GM12878 (cell line): ENCODE measurements at regions of chr9 and their contacts with region 1.

Region 1: GRCh38 chr9:116737152-116737546 is 50.0 kb downstream of the TRIM32 start:
- DNase-seq: peak; percentile 1
- ATAC-seq: peak; percentile 91
- H3K4me3 ChIP-seq: no peak overlapping the region
- H3K27ac ChIP-seq: no peak overlapping the region
- H3K4me1 ChIP-seq: peaks cover 10% of the 10 kb centered on the region
- H3K27me3 ChIP-seq: no peaks in the 10 kb centered on the region
- CTCF ChIP-seq: peak; percentile 94 to 98 (median 96)
- EP300 ChIP-seq: no peak
- POLR2A ChIP-seq: no peak
- RAD21 ChIP-seq: peak; percentile 98

Region 2: DNA sequence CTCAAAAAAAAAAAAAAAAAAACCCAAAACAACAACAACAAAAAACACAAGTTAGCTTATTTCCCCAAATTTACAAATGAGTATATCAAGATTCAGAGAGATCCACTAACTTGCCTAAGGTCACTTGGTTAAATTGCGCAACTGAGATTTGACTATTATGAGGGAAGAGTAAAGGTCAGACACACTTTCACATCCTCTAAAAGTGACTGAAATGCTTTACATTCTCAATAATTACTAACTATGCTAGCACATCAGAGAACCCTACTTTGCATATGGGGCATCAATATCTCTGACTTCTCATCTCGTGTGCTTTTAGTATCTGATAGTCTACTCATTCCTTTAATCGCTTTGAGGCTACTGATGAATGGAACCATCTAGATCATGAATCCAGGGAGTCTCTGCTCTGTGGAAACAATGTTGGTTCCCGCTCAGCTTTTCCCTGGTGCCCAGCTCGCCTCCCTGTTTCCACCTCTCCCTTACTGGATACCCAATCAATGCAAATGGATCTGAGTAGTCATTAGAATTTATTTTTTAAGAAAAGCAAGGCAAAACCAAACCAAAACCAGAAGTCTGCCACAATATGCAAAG is 232.2 kb before region 1 on chr9:
- CTCF ChIA-PET with region 1: no interaction called
- POLR2A ChIA-PET with region 1: no interaction called
- RAD21 ChIA-PET with region 1: no interaction called
- SMC1A ChIA-PET with region 1: no interaction called
- in situ Hi-C with region 1: no loop called
- intact Hi-C with region 1: no loop called
- DNase-seq: peak; percentile 27
- ATAC-seq: peak; percentile 96
- H3K4me3 ChIP-seq: no peak overlapping the region
- H3K27ac ChIP-seq: no peak overlapping the region
- H3K4me1 ChIP-seq: peaks cover 4% of the 10 kb centered on the region
- H3K27me3 ChIP-seq: no peaks in the 10 kb centered on the region
- CTCF ChIP-seq: no peak
- EP300 ChIP-seq: peak in 1 of 2 experiments; percentile 44; a peak in 1 of 4 replicates
- POLR2A ChIP-seq: no peak
- RAD21 ChIP-seq: no peak

Region 3: DNA sequence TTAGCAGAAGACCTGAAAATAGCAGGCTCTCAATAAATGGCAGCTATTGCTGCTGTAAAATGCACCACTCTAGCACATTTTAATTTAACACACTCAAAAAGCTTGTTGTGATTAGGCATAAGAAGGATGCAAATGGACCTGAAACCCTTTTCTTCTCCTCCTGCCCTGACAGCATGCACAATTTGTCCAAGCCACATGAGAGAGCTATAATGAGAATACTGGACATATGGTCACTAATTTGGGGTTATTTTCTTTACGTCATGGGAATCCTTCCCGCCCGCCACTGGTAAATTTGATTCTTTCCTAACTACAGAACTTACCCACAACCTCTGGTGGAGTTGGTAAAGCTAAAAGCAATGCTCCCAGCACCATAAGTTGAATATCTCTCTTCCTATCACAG is 12.0 kb after region 1 on chr9:
- CTCF ChIA-PET with region 1: interaction called, 14 read pairs
- POLR2A ChIA-PET with region 1: no interaction called
- RAD21 ChIA-PET with region 1: no interaction called
- SMC1A ChIA-PET with region 1: interaction called, 5 read pairs
- in situ Hi-C with region 1: no loop called
- intact Hi-C with region 1: no loop called
- DNase-seq: no peak
- ATAC-seq: no peak
- H3K4me3 ChIP-seq: no peak overlapping the region
- H3K27ac ChIP-seq: no peak overlapping the region
- H3K4me1 ChIP-seq: no peaks in the 10 kb centered on the region
- H3K27me3 ChIP-seq: no peaks in the 10 kb centered on the region; a peak in 2 of 4 replicates
- CTCF ChIP-seq: no peak
- EP300 ChIP-seq: no peak
- POLR2A ChIP-seq: no peak
- RAD21 ChIP-seq: no peak

Region 4: GRCh38 chr9:117046666-117047327 is 309.6 kb after region 1 on chr9:
- CTCF ChIA-PET with region 1: interaction called, 3 read pairs
- POLR2A ChIA-PET with region 1: no interaction called
- RAD21 ChIA-PET with region 1: no interaction called
- SMC1A ChIA-PET with region 1: no interaction called
- in situ Hi-C with region 1: no loop called
- intact Hi-C with region 1: loop called (anchors 10 kb)
- DNase-seq: peak; percentile 12
- ATAC-seq: peak; percentile 93
- H3K4me3 ChIP-seq: no peak overlapping the region
- H3K27ac ChIP-seq: no peak overlapping the region
- H3K4me1 ChIP-seq: no peaks in the 10 kb centered on the region
- H3K27me3 ChIP-seq: no peaks in the 10 kb centered on the region
- CTCF ChIP-seq: peak in 1 of 3 experiments; percentile 26; a peak in 1 of 6 replicates
- EP300 ChIP-seq: no peak
- POLR2A ChIP-seq: no peak
- RAD21 ChIP-seq: peak; percentile 31; the same call in 1 of the 2 replicates

Region 5: DNA sequence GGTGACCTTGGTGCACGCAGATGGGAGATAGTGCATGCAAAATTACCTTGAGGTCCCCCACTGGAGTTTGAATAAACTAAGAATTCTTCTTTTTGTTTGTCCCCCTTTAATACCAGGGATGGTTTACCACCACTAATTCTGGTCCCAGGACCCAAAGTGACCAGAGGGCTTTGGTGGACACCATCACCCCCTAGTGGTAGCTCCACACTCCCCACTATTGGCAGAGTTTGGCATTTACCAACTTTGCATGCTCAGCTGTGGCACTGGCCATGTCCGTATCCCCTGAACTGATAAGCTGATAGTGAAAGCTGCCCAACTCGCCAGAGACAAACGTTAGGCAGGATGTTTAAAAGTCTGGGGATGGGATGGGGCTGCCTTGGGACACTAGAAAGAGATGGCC is 674.4 kb after region 1 on chr9:
- CTCF ChIA-PET with region 1: interaction called, 13 read pairs
- POLR2A ChIA-PET with region 1: no interaction called
- RAD21 ChIA-PET with region 1: no interaction called
- SMC1A ChIA-PET with region 1: interaction called, 5 read pairs
- in situ Hi-C with region 1: loop called (anchors 25 kb)
- intact Hi-C with region 1: loop called (anchors 1 kb)
- DNase-seq: no peak
- ATAC-seq: peak; percentile 93
- H3K4me3 ChIP-seq: no peak overlapping the region
- H3K27ac ChIP-seq: no peak overlapping the region
- H3K4me1 ChIP-seq: no peaks in the 10 kb centered on the region
- H3K27me3 ChIP-seq: peaks cover 8 to 19% of the 10 kb centered on the region in 2 experiments; a peak in 3 of 4 replicates
- CTCF ChIP-seq: peak; percentile 53 to 66 (median 54)
- EP300 ChIP-seq: no peak
- POLR2A ChIP-seq: no peak
- RAD21 ChIP-seq: peak; percentile 57